ENCODE measurements at regions of chr3 and their contacts with region 1.

Region 1: DNA sequence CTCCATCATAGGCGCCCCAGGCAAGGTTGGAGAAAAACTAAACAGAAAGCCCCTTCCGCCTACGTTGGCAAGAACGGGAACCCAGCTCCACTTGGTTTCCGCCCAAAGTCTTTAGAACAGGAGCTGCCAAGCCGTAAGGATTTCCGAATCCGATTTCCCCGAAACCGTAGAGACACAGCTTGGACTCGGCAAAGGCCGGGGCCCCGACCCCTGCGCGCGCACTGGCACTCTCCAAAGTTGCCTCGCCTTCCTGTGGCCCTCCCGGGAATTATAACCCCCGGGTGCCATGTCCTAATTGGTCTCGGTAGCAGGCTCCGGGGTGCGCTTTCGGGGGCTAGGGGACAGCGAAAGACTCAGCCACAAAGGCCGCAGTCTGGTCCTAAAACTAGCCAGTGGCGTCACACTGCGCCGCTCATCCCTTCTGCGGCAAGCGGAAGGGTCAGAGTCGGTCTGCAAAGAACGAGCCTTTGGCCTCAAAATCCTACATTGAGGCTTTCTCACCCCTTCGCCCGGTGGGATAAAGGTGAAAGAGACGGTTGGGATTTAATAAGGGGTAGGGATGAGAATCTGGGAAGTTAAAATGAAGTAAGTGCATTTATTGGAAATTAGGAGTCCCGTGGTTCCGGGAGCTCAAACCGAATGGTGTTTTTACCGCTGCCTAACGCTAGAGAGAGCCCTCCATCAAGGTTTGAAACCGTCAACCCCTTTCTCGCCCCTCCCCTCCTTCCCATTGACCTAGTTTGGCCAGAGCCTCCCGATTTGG is 6.8 kb downstream of the BCL6 start:
- DNase-seq: peak; percentile 82
- ATAC-seq: peak; percentile 50
- H3K4me3 Mint-ChIP-seq: peak overlapping the region; percentile 93
- H3K27ac Mint-ChIP-seq: peak overlapping the region; percentile 98
- H3K4me1 Mint-ChIP-seq: peaks cover 47% of the 10 kb centered on the region
- H3K27me3 Mint-ChIP-seq: no peaks in the 10 kb centered on the region
- CTCF ChIP-seq: peak; percentile 79

Region 2: DNA sequence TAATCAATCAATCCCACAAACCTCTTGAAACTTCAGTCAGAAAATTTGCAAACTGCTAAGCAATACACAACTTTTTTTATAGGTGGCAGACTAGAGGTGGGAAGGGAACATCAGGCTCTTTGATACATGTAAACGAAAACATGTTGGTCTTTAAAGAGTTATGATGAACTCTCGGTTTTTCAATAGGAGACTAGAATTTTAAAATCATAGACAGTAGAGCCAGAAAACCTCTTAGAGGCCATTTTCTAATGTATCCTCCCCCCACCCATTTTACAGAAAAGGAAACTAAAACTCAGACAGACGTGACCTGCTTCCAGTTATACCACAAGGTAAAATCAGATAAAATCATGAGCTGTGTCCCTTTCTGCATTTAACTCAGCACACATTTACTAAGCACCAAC is 236.4 kb after region 1 on chr3:
- CTCF ChIA-PET with region 1: interaction called, 12 read pairs
- POLR2A ChIA-PET with region 1: interaction called, 8 read pairs
- intact Hi-C with region 1: loop called (anchors 2 kb)
- DNase-seq: no peak
- ATAC-seq: peak; percentile 48
- H3K4me3 Mint-ChIP-seq: peak overlapping the region; percentile 30
- H3K27ac Mint-ChIP-seq: peak overlapping the region; percentile 86
- H3K4me1 Mint-ChIP-seq: peaks cover 52% of the 10 kb centered on the region
- H3K27me3 Mint-ChIP-seq: no peaks in the 10 kb centered on the region
- CTCF ChIP-seq: no peak

Region 3: GRCh38 chr3:188164248-188164687 is 425.8 kb after region 1 on chr3:
- CTCF ChIA-PET with region 1: interaction called, 23 read pairs
- POLR2A ChIA-PET with region 1: interaction called, 4 read pairs
- intact Hi-C with region 1: loop called (anchors 5 kb)
- DNase-seq: peak; percentile 41
- ATAC-seq: no peak
- H3K4me3 Mint-ChIP-seq: no peak overlapping the region
- H3K27ac Mint-ChIP-seq: peak overlapping the region; percentile 46
- H3K4me1 Mint-ChIP-seq: peaks cover 44% of the 10 kb centered on the region
- H3K27me3 Mint-ChIP-seq: no peaks in the 10 kb centered on the region
- CTCF ChIP-seq: no peak

Region 4: GRCh38 chr3:188303286-188303813 is 564.8 kb after region 1 on chr3:
- CTCF ChIA-PET with region 1: interaction called, 19 read pairs
- POLR2A ChIA-PET with region 1: interaction called, 5 read pairs
- intact Hi-C with region 1: no loop called
- DNase-seq: no peak
- ATAC-seq: no peak
- H3K4me3 Mint-ChIP-seq: no peak overlapping the region
- H3K27ac Mint-ChIP-seq: no peak overlapping the region
- H3K4me1 Mint-ChIP-seq: peaks cover 44% of the 10 kb centered on the region
- H3K27me3 Mint-ChIP-seq: no peaks in the 10 kb centered on the region
- CTCF ChIP-seq: no peak

Region 5: GRCh38 chr3:188673646-188674186 is 935.2 kb after region 1 on chr3:
- CTCF ChIA-PET with region 1: interaction called, 14 read pairs
- POLR2A ChIA-PET with region 1: no interaction called
- intact Hi-C with region 1: no loop called
- DNase-seq: no peak
- ATAC-seq: no peak
- H3K4me3 Mint-ChIP-seq: no peak overlapping the region
- H3K27ac Mint-ChIP-seq: no peak overlapping the region
- H3K4me1 Mint-ChIP-seq: peaks cover 15% of the 10 kb centered on the region
- H3K27me3 Mint-ChIP-seq: no peaks in the 10 kb centered on the region
- CTCF ChIP-seq: no peak

Region 6: GRCh38 chr3:189041482-189042090 is 1303.1 kb after region 1 on chr3:
- CTCF ChIA-PET with region 1: interaction called, 87 read pairs
- POLR2A ChIA-PET with region 1: interaction called, 3 read pairs
- intact Hi-C with region 1: loop called (anchors 10 kb)
- DNase-seq: peak; percentile 89
- ATAC-seq: peak; percentile 90
- H3K4me3 Mint-ChIP-seq: no peak overlapping the region
- H3K27ac Mint-ChIP-seq: peak overlapping the region; percentile 75
- H3K4me1 Mint-ChIP-seq: peaks cover 45% of the 10 kb centered on the region
- H3K27me3 Mint-ChIP-seq: no peaks in the 10 kb centered on the region
- CTCF ChIP-seq: peak; percentile 85